ENCODE measurements at regions of chr20 and their contacts with region 1.

Region 1: GRCh38 chr20:44733341-44734069 is 12.2 kb upstream of the KCNK15 start:
- DNase-seq: peak in 1 of 2 experiments; percentile 86
- H3K4me3 ChIP-seq: no peak overlapping the region
- H3K27ac ChIP-seq: no peak overlapping the region
- H3K4me1 ChIP-seq: peaks cover 3 to 13% (median 9%) of the 10 kb centered on the region in 4 experiments; a peak in 4 of 7 replicates
- H3K27me3 ChIP-seq: no peaks in the 10 kb centered on the region
- CTCF ChIP-seq: peak; percentile 90 to 97 (median 96)
- EP300 ChIP-seq: no peak
- POLR2A ChIP-seq: no peak
- RAD21 ChIP-seq: peak; percentile 98 to 99

Region 2: DNA sequence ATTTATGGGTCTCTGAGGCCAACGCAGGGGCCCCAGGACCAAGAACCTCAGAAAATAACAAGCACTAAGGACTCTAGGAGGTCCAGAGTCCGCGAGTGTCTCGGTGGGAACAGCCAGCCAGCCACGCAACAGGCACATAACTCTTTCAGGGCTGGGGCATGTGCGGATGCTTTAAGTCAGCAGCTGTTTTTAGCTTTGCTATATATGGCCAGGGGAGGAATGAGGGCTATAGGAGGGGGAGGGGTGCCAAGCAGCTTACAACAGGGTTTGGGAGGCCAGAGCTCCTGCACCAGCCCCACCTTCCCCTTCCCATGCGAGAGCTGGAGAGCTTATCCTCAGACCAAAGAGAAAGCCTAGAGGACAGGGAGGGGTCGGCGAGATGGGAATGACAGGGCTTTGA is 552.7 kb before region 1 on chr20:
- CTCF ChIA-PET with region 1: no interaction called
- POLR2A ChIA-PET with region 1: no interaction called
- DNase-seq: peak in 1 of 2 experiments; percentile 34
- H3K4me3 ChIP-seq: no peak overlapping the region
- H3K27ac ChIP-seq: no peak overlapping the region
- H3K4me1 ChIP-seq: peaks cover 0 to 6% (median 1%) of the 10 kb centered on the region in 4 experiments; a peak in 3 of 7 replicates
- H3K27me3 ChIP-seq: no peaks in the 10 kb centered on the region
- CTCF ChIP-seq: no peak
- EP300 ChIP-seq: no peak
- POLR2A ChIP-seq: no peak
- RAD21 ChIP-seq: no peak

Region 3: DNA sequence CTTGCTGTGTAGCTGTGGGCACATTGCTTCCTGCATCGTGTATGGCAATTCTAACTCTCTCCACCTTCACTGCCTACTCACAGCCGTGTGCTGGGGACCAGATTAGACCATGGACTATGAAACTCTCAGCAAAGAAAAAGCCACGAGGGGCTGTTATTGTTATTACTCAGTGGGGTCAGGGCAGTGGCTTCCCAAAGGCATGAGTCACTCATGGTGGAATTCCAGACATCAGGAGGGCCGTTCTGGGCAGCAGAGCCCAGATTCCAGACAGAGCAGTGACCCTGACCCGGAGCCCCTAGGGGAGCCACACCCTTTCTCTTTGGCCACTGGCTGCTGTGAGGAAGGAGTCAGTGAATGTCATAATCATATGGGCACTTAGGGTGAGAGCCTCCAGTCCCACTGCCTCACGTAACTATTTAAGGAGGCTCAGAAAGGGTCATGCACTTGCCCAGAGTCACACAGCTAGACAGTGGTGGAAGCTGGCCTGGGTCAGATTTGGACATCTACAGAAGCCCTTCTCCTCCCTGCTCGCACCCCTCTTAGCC is 40.5 kb before region 1 on chr20:
- CTCF ChIA-PET with region 1: interaction called, 83 read pairs
- POLR2A ChIA-PET with region 1: interaction called, 3 read pairs
- DNase-seq: peak in 1 of 2 experiments; percentile 38
- H3K4me3 ChIP-seq: no peak overlapping the region
- H3K27ac ChIP-seq: no peak overlapping the region
- H3K4me1 ChIP-seq: peaks cover 0 to 3% (median under 1%) of the 10 kb centered on the region in 4 experiments; a peak in 2 of 7 replicates
- H3K27me3 ChIP-seq: no peaks in the 10 kb centered on the region
- CTCF ChIP-seq: no peak
- EP300 ChIP-seq: no peak
- POLR2A ChIP-seq: no peak
- RAD21 ChIP-seq: no peak

Region 4: DNA sequence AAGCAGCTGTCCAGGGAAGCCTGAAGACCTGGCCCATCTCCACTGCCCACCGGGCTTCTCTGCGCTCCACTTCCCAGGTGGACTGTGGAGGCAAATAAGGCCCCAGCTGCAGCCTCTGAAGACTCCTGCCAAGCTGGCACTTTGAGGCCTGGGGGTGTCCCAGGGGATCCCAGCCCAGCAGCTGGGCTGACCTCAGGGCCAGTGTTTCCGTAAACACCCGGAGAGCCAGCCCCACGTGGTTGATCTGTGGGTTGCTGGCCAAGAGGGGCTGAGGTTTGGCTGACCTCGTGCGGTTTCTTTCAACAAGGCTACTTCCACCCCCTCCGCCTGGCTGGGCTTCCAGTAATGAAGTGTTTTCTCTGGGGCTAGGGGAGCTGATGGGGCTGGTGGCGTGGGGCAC is 30.7 kb before region 1 on chr20:
- CTCF ChIA-PET with region 1: interaction called, 180 read pairs
- POLR2A ChIA-PET with region 1: no interaction called
- DNase-seq: no peak
- H3K4me3 ChIP-seq: no peak overlapping the region
- H3K27ac ChIP-seq: no peak overlapping the region; the same call in 1 of the 2 replicates
- H3K4me1 ChIP-seq: peaks cover 0 to 14% (median 10%) of the 10 kb centered on the region in 4 experiments; a peak in 6 of 7 replicates
- H3K27me3 ChIP-seq: no peaks in the 10 kb centered on the region
- CTCF ChIP-seq: no peak
- EP300 ChIP-seq: no peak
- POLR2A ChIP-seq: no peak
- RAD21 ChIP-seq: no peak

Region 5: GRCh38 chr20:44714696-44715482 is 18.6 kb before region 1 on chr20 and contains the start of gene CCN5:
- CTCF ChIA-PET with region 1: interaction called, 86 read pairs
- POLR2A ChIA-PET with region 1: interaction called, 3 read pairs
- DNase-seq: no peak
- H3K4me3 ChIP-seq: no peak within 1 kb of the TSS
- H3K27ac ChIP-seq: no peak within 1 kb of the TSS
- H3K4me1 ChIP-seq: peaks cover 0 to 3% (median 0%) of the 10 kb centered on the region in 4 experiments; a peak in 1 of 7 replicates
- H3K27me3 ChIP-seq: no peaks in the 10 kb centered on the region
- CTCF ChIP-seq: no peak
- EP300 ChIP-seq: no peak
- POLR2A ChIP-seq: no peak
- RAD21 ChIP-seq: no peak
- total RNA-seq, gene CCN5: not detected in 2 replicates

Region 6: DNA sequence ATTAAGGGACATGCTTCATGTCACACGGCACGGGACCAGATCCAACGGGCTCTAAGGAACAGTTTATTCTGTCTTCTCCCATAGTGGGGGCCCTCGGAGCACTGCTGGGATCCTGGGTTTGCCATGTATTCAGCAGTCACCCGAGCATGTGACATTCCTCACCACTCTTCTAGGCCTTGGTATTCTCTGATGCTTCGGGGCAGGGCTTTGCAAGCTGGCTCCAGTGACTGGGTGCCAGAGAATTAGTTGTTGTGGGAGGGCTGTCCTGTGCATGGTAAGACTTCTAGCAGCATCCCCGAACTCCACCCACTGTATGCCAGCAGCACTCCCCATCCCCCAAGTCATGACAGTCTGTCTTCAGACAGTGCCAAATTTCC is 12.9 kb before region 1 on chr20:
- CTCF ChIA-PET with region 1: interaction called, 86 read pairs
- POLR2A ChIA-PET with region 1: interaction called, 3 read pairs
- DNase-seq: no peak
- H3K4me3 ChIP-seq: no peak overlapping the region
- H3K27ac ChIP-seq: no peak overlapping the region
- H3K4me1 ChIP-seq: peaks cover 0 to 3% (median 0%) of the 10 kb centered on the region in 4 experiments; a peak in 1 of 7 replicates
- H3K27me3 ChIP-seq: no peaks in the 10 kb centered on the region
- CTCF ChIP-seq: no peak
- EP300 ChIP-seq: no peak
- POLR2A ChIP-seq: no peak
- RAD21 ChIP-seq: no peak

Region 7: GRCh38 chr20:44805979-44806620 is 72.6 kb after region 1 on chr20:
- CTCF ChIA-PET with region 1: no interaction called
- POLR2A ChIA-PET with region 1: no interaction called
- DNase-seq: peak in 1 of 2 experiments; percentile 82
- H3K4me3 ChIP-seq: no peak overlapping the region
- H3K27ac ChIP-seq: no peak overlapping the region
- H3K4me1 ChIP-seq: peaks cover 0 to 10% (median 5%) of the 10 kb centered on the region in 4 experiments; a peak in 6 of 7 replicates
- H3K27me3 ChIP-seq: peaks cover 0 to 16% (median 11%) of the 10 kb centered on the region in 4 experiments; a peak in 6 of 7 replicates
- CTCF ChIP-seq: no peak
- EP300 ChIP-seq: no peak
- POLR2A ChIP-seq: no peak
- RAD21 ChIP-seq: no peak

Measured in H1 (cell line).